Activated T-helper 1 cell treated with anti-CD3 and anti-CD28 coated beads, Interleukin-12 subunit alpha, Interleukin-12 subunit beta, Interleukin-2, Interleukin-4 antibody, amounts not matched to agents 30 ng/mL and 10 ng/mL and 1 ng/mL, durations not matched to agents 14 hours and 24 hours and 36 hours (primary cell): ENCODE measurements at regions of chr13 and their contacts with region 1.

Region 1: GRCh38 chr13:75537401-75538365 is at the start of gene COMMD6:
- DNase-seq: peak; percentile 60
- H3K4me3 Mint-ChIP-seq: peak within 1 kb of the TSS; percentile 94
- H3K27ac Mint-ChIP-seq: peak within 1 kb of the TSS; percentile 87
- H3K4me1 Mint-ChIP-seq: peaks cover 44% of the 10 kb centered on the region
- H3K27me3 Mint-ChIP-seq: no peaks in the 10 kb centered on the region
- total RNA-seq, gene COMMD6: 87.1 and 88.7 TPM in 2 replicates

Region 2: GRCh38 chr13:75482070-75482819 is 55.4 kb before region 1 on chr13 and contains the start of gene TBC1D4:
- intact Hi-C with region 1: loop called (anchors 1 kb)
- DNase-seq: peak; percentile 40
- H3K4me3 Mint-ChIP-seq: peak within 1 kb of the TSS; percentile 99
- H3K27ac Mint-ChIP-seq: peak within 1 kb of the TSS; percentile 89
- H3K4me1 Mint-ChIP-seq: peaks cover 45% of the 10 kb centered on the region
- H3K27me3 Mint-ChIP-seq: peaks cover 49% of the 10 kb centered on the region
- total RNA-seq, gene TBC1D4: 66.6 and 73.5 TPM in 2 replicates

Region 3: GRCh38 chr13:75549262-75550158 is 11.8 kb after region 1 on chr13 and contains the start of gene UCHL3:
- intact Hi-C with region 1: loop called (anchors 1 kb)
- DNase-seq: peak; percentile 95
- H3K4me3 Mint-ChIP-seq: peak within 1 kb of the TSS; percentile 99
- H3K27ac Mint-ChIP-seq: peak within 1 kb of the TSS; percentile 98
- H3K4me1 Mint-ChIP-seq: peaks cover 39% of the 10 kb centered on the region
- H3K27me3 Mint-ChIP-seq: no peaks in the 10 kb centered on the region
- total RNA-seq, gene UCHL3: 38.9 and 46.6 TPM in 2 replicates

Region 4: GRCh38 chr13:75566658-75567057 is 29.0 kb after region 1 on chr13:
- intact Hi-C with region 1: no loop called
- DNase-seq: no peak
- H3K4me3 Mint-ChIP-seq: no peak overlapping the region
- H3K27ac Mint-ChIP-seq: no peak overlapping the region
- H3K4me1 Mint-ChIP-seq: no peaks in the 10 kb centered on the region
- H3K27me3 Mint-ChIP-seq: no peaks in the 10 kb centered on the region

Region 5: GRCh38 chr13:75635828-75636435 is 98.2 kb after region 1 on chr13 and contains the start of gene LMO7:
- intact Hi-C with region 1: loop called (anchors 2 kb)
- DNase-seq: peak; percentile 37
- H3K4me3 Mint-ChIP-seq: peak within 1 kb of the TSS; percentile 76
- H3K27ac Mint-ChIP-seq: no peak within 1 kb of the TSS
- H3K4me1 Mint-ChIP-seq: peaks cover 16% of the 10 kb centered on the region
- H3K27me3 Mint-ChIP-seq: peaks cover 26% of the 10 kb centered on the region
- total RNA-seq, gene LMO7: 2.9 and 3.2 TPM in 2 replicates

Region 6: GRCh38 chr13:75704579-75705320 is 167.1 kb after region 1 on chr13:
- intact Hi-C with region 1: no loop called
- DNase-seq: no peak
- H3K4me3 Mint-ChIP-seq: no peak overlapping the region
- H3K27ac Mint-ChIP-seq: no peak overlapping the region
- H3K4me1 Mint-ChIP-seq: peaks cover 12% of the 10 kb centered on the region
- H3K27me3 Mint-ChIP-seq: no peaks in the 10 kb centered on the region

Region 7: DNA sequence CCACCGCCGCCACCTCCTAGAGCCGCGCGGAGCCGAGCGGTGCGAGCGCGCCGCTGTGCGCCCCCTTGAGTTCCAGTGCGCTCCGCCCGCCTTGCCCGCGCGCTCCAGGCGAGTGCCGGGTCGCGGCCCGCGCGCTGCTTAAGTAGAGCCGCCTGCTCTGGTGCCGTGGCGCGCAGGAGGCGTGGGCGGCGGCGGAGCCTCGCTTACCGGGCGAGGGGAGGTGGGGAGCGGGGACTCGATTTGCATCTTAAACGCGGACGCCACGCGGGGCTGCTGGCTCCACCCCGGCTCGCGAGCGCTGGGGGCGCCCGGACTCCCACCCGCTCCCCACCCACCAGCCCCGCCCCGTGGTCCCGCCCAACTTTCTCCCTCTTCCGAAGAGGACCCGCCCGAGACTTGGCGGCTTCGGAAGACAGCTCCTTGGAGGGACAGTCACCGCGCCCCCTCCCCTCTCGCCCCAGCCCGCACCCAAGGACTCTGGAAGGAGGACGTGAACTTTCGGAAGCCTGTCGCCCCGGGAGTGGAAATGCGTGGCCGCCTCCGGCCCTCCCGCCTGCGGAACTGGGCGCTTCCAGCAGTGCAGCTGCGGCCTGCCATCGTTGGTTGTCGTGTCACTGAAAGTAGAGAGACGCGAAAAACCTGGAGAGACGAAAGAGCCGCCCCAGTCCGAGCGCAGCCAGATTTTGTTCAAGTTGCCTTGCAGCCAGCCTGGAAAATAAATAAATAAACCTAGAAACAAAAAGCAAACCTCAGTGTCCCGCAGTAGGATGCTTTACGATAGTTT is 1348.8 kb after region 1 on chr13 and contains the start of gene KCTD12:
- intact Hi-C with region 1: loop called (anchors 10 kb)
- DNase-seq: peak; percentile 60
- H3K4me3 Mint-ChIP-seq: peak within 1 kb of the TSS; percentile 90
- H3K27ac Mint-ChIP-seq: peak within 1 kb of the TSS; percentile 85
- H3K4me1 Mint-ChIP-seq: peaks cover 28% of the 10 kb centered on the region
- H3K27me3 Mint-ChIP-seq: peaks cover 28% of the 10 kb centered on the region
- total RNA-seq, gene KCTD12: 10.4 and 10.7 TPM in 2 replicates